ENCODE measurements at regions of chr9 and their contacts with region 1.

Region 1: DNA sequence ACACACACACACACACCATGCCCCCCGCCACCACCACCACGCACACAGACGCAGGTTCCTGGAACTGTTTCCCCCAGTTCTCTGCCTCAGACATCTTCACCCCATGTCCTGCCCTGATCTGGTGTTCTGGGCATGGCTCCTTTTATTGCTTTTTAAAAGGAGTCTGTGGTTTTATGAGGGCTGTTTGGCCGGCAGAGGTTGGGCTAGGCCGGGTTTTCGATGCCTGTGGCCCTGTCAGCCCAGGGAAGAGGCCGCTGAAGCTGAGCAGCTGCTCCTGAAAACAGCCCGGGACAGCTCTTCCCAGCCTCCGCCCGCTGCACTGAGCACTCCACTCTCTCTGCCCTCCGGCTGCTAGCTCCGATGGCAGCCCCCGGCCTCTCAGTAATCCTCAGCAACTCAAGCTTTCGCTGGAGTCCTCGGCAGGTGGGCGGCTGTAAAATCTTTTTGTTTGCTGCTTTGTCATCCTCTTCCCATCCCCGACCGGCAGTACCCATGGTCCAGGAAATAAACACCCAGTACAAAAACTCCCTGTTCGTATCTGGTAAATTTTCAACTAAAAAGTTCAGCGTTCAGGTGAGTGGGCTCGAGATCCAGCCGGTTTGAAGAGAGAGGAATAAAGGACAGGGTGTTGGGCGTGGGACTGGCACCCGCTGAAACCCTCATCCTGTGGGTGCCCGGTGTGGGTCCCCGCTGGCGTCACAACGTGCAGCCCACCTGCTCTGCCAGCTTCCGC is 103.0 kb upstream of the ERCC6L2 start:
- DNase-seq: peak; percentile 75 to 87
- ATAC-seq: peak; percentile 95

Region 2: DNA sequence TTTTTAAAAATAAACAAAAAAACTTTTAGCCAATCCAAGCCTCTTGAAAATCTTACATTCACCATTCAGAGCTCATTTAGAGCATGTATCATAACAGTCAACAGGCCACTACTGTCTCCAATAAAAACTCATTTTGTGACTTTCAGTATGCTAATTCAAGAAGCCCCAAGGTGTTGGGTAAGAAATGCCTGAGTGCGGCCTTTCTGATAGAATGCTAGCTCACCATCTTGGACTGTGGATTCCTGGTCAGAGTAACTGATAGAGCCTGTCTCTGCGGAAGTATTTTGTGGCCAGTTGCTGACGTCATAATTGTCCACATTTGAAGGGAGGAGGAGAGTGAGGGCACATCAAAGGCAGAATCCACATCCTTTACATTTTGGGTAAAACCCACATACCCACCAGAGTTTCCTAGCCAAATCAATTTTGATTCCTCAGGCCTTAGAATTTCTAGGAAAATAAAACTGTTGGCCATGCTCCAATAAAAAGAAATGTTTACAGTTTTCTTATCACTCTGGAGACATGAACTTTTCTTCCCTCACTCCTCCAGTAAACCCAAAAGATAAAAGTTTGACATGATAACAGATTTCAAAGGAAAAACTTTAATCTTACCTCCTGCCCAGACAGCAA is 61.9 kb after region 1 on chr9:
- intact Hi-C with region 1: no loop called
- DNase-seq: no peak
- ATAC-seq: no peak

Region 3: GRCh38 chr9:95852059-95853032 is 79.9 kb after region 1 on chr9:
- intact Hi-C with region 1: no loop called
- DNase-seq: no peak
- ATAC-seq: no peak

Region 4: GRCh38 chr9:95875305-95876137 is 103.0 kb after region 1 on chr9 and contains the start of gene ERCC6L2:
- intact Hi-C with region 1: loop called in 1 of 2 experiments (anchors 5 kb)
- DNase-seq: peak; percentile 96
- ATAC-seq: peak; percentile 92
- total RNA-seq, gene ERCC6L2: 39.4 to 43.5 TPM

Region 5: DNA sequence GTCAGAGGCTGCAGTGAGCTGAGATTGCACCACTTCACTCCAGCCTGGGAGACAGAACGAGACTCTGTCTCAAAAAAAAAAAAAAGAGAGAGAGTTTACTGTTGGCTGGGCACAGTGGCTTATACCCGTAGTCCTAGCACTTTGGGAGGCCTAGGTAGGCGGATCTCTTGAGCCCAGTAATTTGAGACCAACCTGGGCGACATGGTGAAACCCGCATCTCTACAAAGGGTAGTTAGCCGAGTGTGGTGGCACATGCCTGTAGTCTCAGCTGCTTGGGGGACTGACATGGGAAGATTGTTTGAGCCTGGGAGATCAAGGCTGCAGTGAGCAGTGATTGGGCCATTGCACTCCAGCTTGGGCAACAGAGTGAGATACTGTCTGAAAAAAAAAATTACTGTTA is 690.1 kb after region 1 on chr9:
- intact Hi-C with region 1: no loop called
- DNase-seq: no peak
- ATAC-seq: no peak